Breast epithelium (tissue), 4 donors: ENCODE measurements at regions of chr16 and their contacts with region 1.

Region 1: DNA sequence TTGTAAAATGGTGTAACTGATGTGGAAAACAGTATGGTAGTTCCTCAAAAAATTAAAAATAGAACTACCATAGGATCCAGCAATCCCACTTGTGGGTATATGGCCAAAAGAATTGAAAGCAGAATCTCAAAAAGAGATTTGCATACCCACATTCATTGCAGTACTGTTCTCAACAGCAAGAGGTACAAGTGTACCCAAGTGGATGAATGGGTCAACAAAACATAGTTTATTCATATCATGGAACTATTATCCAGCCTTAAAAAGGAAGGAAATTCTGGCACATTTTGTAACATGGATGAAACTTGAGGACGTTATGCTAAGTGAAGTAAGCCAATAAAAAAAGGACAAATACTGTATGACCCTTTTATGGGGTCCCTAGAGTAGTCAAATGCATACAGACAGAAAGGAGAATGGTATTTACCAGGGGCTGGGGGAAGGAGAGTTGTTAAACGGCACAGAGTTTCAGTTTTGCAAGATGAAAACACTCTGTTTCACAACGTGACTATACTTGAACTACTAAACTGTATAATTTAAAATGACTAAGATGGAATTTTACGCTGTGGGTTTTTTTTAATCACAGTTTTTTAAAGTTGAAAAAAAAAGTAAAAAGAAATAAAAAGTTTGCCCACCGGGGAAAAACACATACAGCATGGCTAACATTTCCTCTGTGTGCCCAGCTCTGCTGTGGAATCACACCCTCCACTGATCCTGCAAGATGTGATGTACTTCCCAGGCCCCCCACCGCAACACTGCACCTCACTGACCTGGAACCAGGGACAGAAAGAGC is 6.1 kb downstream of the TVP23A start:
- DNase-seq: no peak
- H3K4me3 ChIP-seq: no peak overlapping the region
- H3K27ac ChIP-seq: no peak overlapping the region
- H3K4me1 ChIP-seq: no peaks in the 10 kb centered on the region
- H3K27me3 ChIP-seq: no peaks in the 10 kb centered on the region
- CTCF ChIP-seq: no peak
- POLR2A ChIP-seq: no peak

Region 2: DNA sequence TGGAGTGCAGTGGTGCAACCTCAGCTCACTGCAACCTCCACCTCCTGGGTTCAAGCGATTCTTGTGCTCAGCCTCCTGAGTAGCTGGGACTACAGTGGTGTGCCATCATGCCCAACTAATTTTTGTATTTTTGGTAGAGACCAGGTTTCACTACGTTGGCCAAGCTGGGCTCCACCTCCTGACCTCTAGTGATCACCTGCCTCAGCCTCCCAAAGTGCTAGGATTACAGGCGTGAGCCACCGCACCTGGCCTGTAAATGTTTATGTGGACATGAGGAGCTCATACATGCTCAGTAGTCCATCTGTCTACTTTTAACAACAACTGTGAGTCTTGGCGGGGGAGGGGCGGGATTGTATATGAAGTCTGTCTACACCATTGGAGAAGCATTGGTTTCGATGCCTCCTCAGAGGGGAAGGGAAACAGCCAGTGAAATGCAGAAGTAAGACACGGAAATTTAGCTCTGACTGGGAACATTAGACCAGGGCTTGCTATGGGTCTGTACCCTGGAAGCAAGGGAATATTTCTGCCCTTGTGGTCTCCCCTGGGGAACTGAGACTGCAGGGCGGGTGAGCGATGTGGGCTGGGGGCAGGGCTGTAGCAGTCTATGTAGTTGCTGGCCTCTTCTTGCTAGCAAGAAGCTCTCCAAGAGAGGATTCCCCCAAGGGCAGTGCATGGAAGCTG is 59.5 kb before region 1 on chr16:
- intact Hi-C with region 1: loop called (anchors 10 kb)
- DNase-seq: no peak
- H3K4me3 ChIP-seq: no peak overlapping the region
- H3K27ac ChIP-seq: no peak overlapping the region
- H3K4me1 ChIP-seq: no peaks in the 10 kb centered on the region
- H3K27me3 ChIP-seq: no peaks in the 10 kb centered on the region
- CTCF ChIP-seq: no peak
- POLR2A ChIP-seq: no peak

Region 3: GRCh38 chr16:11181899-11182279 is 369.4 kb after region 1 on chr16:
- intact Hi-C with region 1: no loop called
- DNase-seq: peak in 1 of 2 donors; percentile 56
- H3K4me3 ChIP-seq: peak overlapping the region in 1 of 3 donors; percentile 15
- H3K27ac ChIP-seq: peak overlapping the region; percentile 35 to 63
- H3K4me1 ChIP-seq: peaks cover 0 to 6% of the 10 kb centered on the region in 2 donors
- H3K27me3 ChIP-seq: no peaks in the 10 kb centered on the region
- CTCF ChIP-seq: no peak
- POLR2A ChIP-seq: no peak